ENCODE measurements at regions of chr17 and their contacts with region 1.

Region 1: GRCh38 chr17:64020056-64020766 is at the start of gene ICAM2:
- DNase-seq: peak; percentile 94 to 99 (median 97)
- H3K4me3 ChIP-seq: peak within 1 kb of the TSS; percentile 93 to 96
- H3K4me3 Mint-ChIP-seq: peak within 1 kb of the TSS; percentile 97 to 100 (median 99)
- H3K27ac ChIP-seq: peak within 1 kb of the TSS; percentile 93
- H3K27ac Mint-ChIP-seq: peak within 1 kb of the TSS; percentile 99 to 100 (median 100)
- H3K4me1 ChIP-seq: peaks cover 71% of the 10 kb centered on the region
- H3K4me1 Mint-ChIP-seq: peaks cover 51 to 85% (median 63%) of the 10 kb centered on the region in 4 donors
- H3K27me3 ChIP-seq: no peaks in the 10 kb centered on the region
- H3K27me3 Mint-ChIP-seq: peaks cover 0 to 1% of the 10 kb centered on the region in 2 donors
- total RNA-seq, gene ICAM2: 150 to 158 TPM

Region 2: DNA sequence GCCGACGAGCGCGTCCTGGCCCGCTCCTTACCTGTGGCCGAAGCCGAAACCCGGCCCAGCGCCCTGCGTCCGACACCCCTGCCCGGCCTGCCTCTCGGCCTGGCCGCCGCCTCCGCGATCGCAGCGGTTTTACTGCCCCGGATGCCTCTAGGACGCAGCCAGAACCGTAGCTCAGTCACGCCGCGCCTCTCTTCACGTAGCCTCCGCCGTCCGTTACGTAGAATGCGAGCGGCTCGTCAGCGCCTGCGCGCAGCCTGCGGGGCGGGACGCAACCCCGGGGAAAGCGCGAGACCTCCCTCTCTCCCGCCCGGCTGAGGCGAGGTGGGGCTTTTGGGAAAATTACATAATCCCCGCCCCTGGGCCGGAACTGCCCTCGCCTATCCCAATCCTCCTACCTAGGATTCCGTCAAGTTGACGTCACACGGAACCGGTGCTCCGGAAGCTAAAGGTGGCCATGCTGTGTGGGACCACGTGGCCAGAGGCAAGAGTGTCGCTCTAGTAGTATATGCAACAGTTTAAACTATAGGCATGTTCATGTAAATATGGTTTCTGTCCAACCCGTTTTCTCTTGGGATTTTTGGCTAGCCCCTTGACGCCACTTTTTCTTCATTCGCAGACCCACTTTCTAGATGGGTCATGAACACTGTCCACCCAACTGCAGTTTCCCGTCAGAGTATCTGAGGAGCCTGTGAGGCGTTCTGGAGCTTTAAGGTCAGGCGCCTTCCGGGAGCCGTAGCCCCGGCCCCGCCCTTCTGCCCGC is 246.7 kb before region 1 on chr17 and contains the start of gene CCDC47:
- CTCF ChIA-PET with region 1: no interaction called
- POLR2A ChIA-PET with region 1: interaction called, 8 read pairs
- intact Hi-C with region 1: loop called (anchors 2 kb)
- DNase-seq: peak; percentile 99
- H3K4me3 ChIP-seq: peak within 1 kb of the TSS; percentile 87 to 97
- H3K4me3 Mint-ChIP-seq: peak within 1 kb of the TSS; percentile 91 to 100 (median 99)
- H3K27ac ChIP-seq: peak within 1 kb of the TSS; percentile 99
- H3K27ac Mint-ChIP-seq: peak within 1 kb of the TSS; percentile 99 to 100 (median 100)
- H3K4me1 ChIP-seq: peaks cover 66% of the 10 kb centered on the region
- H3K4me1 Mint-ChIP-seq: peaks cover 33 to 81% (median 52%) of the 10 kb centered on the region in 4 donors
- H3K27me3 ChIP-seq: no peaks in the 10 kb centered on the region
- H3K27me3 Mint-ChIP-seq: no peaks in the 10 kb centered on the region
- total RNA-seq, gene CCDC47: 36.7 to 39.0 TPM

Region 3: GRCh38 chr17:63859257-63859656 is 161.0 kb before region 1 on chr17:
- CTCF ChIA-PET with region 1: no interaction called
- POLR2A ChIA-PET with region 1: no interaction called
- intact Hi-C with region 1: no loop called
- DNase-seq: no peak
- H3K4me3 ChIP-seq: no peak overlapping the region
- H3K4me3 Mint-ChIP-seq: no peak overlapping the region
- H3K27ac ChIP-seq: no peak overlapping the region
- H3K27ac Mint-ChIP-seq: no peak overlapping the region
- H3K4me1 ChIP-seq: no peaks in the 10 kb centered on the region
- H3K4me1 Mint-ChIP-seq: no peaks in the 10 kb centered on the region
- H3K27me3 ChIP-seq: no peaks in the 10 kb centered on the region
- H3K27me3 Mint-ChIP-seq: no peaks in the 10 kb centered on the region

Region 4: DNA sequence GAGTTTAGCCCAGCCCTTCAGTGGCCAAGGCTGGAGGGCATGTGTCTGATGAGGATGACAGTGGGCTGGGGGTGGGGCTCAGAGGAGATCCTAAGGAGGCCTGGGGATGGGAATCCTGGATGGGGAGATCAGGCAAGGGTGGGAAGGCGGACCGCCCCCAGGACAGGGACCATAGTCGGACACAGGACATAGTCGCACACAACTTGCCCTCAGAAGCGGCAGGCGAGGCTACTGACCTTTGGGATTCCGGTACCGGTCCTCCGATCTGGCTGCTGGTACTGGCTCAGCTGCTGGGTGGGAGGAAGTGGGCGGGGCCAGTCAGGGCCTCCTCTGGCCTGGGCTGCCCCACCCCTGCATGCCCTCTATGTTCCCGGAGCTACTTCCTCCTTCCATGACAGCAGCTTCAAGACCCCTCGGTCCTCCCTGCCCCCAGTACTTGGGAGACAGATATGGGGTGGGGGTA is 89.1 kb before region 1 on chr17:
- CTCF ChIA-PET with region 1: interaction called, 7 read pairs
- POLR2A ChIA-PET with region 1: interaction called, 23 read pairs
- intact Hi-C with region 1: no loop called
- DNase-seq: peak; percentile 43 to 66 (median 49)
- H3K4me3 ChIP-seq: peak overlapping the region; percentile 48 to 51
- H3K4me3 Mint-ChIP-seq: peak overlapping the region; percentile 92 to 98 (median 94)
- H3K27ac ChIP-seq: peak overlapping the region; percentile 71
- H3K27ac Mint-ChIP-seq: peak overlapping the region; percentile 48 to 96 (median 94)
- H3K4me1 ChIP-seq: peaks cover 25% of the 10 kb centered on the region
- H3K4me1 Mint-ChIP-seq: peaks cover 7 to 32% (median 22%) of the 10 kb centered on the region in 4 donors
- H3K27me3 ChIP-seq: no peaks in the 10 kb centered on the region
- H3K27me3 Mint-ChIP-seq: no peaks in the 10 kb centered on the region

Region 5: GRCh38 chr17:63984651-63985386 is 35.4 kb before region 1 on chr17:
- CTCF ChIA-PET with region 1: interaction called, 556 read pairs
- POLR2A ChIA-PET with region 1: interaction called, 37 read pairs
- intact Hi-C with region 1: no loop called
- DNase-seq: peak; percentile 46 to 86 (median 70)
- H3K4me3 ChIP-seq: no peak overlapping the region
- H3K4me3 Mint-ChIP-seq: peak overlapping the region in 5 of 8 donors; percentile 10 to 86 (median 47)
- H3K27ac ChIP-seq: no peak overlapping the region
- H3K27ac Mint-ChIP-seq: peak overlapping the region; percentile 61 to 98 (median 87)
- H3K4me1 ChIP-seq: peaks cover 18% of the 10 kb centered on the region
- H3K4me1 Mint-ChIP-seq: peaks cover 16 to 29% (median 19%) of the 10 kb centered on the region in 4 donors
- H3K27me3 ChIP-seq: no peaks in the 10 kb centered on the region
- H3K27me3 Mint-ChIP-seq: peaks cover 0 to 2% of the 10 kb centered on the region in 2 donors

Region 6: DNA sequence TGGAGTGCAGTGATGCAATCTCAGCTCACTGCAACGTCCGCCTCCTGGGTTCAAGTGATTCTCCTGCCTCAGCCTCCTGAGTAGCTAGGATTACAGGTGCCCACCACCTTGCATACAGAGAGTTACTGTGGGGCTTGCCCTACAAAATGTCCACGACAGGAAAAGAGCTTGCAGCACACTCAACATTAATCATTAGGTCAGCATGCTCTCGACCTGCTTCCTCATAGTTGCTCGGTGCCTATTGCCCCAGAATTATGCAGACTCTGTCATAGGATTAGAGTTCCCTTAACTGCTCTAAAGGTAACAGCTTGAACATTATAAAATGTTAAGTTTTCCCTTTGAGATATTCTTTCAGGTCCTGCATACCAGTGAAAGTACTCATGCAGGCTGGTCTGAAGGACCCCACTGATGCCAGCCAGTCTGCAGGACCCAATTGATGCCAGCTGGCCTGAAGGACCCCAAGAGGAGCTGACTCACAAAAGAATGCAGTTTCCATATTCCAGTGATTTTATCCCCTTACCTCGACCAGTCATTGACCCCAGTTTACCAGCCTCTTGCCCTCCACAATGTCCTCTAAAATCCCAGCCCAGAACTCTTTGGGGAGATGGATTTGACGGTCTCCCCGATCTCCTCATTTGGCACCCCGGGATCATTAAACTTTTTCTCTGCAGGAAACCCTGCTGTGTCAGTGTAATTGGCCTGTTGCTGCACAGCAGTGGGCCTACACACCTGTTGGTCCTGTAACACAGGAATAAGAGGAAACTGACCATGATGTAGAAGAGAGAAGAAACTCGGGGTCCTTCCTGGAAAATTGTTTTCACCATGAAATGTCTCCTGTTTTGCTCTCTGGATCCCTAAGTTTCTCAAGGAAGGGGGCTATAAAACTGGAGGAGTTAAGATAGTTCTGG is 10.5 kb before region 1 on chr17:
- CTCF ChIA-PET with region 1: interaction called, 556 read pairs
- POLR2A ChIA-PET with region 1: interaction called, 587 read pairs
- intact Hi-C with region 1: loop called (anchors 1 kb)
- DNase-seq: no peak
- H3K4me3 ChIP-seq: no peak overlapping the region
- H3K4me3 Mint-ChIP-seq: peak overlapping the region; percentile 21 to 64 (median 46)
- H3K27ac ChIP-seq: no peak overlapping the region
- H3K27ac Mint-ChIP-seq: peak overlapping the region; percentile 60 to 99 (median 85)
- H3K4me1 ChIP-seq: peaks cover 90% of the 10 kb centered on the region
- H3K4me1 Mint-ChIP-seq: peaks cover 40 to 88% (median 61%) of the 10 kb centered on the region in 4 donors
- H3K27me3 ChIP-seq: no peaks in the 10 kb centered on the region
- H3K27me3 Mint-ChIP-seq: no peaks in the 10 kb centered on the region

Region 7: DNA sequence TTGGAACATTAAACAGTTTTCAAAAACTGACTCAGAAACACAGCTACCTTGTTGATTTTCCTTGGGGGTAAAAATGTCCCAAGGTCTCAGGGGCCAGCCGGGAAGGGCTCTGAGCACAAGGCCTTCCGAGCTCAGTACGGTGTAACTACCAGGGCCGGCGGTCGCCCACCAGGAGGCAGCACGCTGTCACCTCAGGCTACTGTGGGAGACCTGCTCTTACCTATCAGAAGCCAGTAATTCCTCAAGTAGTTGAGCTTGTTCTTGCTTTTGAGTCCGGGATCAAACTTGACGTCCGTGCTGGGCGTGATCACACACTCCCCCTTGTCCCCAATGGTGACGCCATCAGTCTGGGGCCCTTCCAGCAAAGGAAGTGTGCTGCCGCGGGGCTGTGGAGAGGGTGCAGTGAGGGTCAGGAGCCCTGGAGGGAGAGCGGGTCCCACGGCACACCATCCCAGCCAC is 43.6 kb after region 1 on chr17:
- CTCF ChIA-PET with region 1: interaction called, 13 read pairs
- POLR2A ChIA-PET with region 1: interaction called, 3 read pairs
- intact Hi-C with region 1: no loop called
- DNase-seq: peak; percentile 39 to 74 (median 54)
- H3K4me3 ChIP-seq: no peak overlapping the region
- H3K4me3 Mint-ChIP-seq: peak overlapping the region; percentile 67 to 92 (median 88)
- H3K27ac ChIP-seq: peak overlapping the region; percentile 41
- H3K27ac Mint-ChIP-seq: peak overlapping the region; percentile 7 to 97 (median 92)
- H3K4me1 ChIP-seq: peaks cover 89% of the 10 kb centered on the region
- H3K4me1 Mint-ChIP-seq: peaks cover 48 to 100% (median 77%) of the 10 kb centered on the region in 4 donors
- H3K27me3 ChIP-seq: no peaks in the 10 kb centered on the region
- H3K27me3 Mint-ChIP-seq: no peaks in the 10 kb centered on the region

Region 8: GRCh38 chr17:64262417-64263260 is 242.4 kb after region 1 on chr17 and contains the start of gene TEX2:
- CTCF ChIA-PET with region 1: interaction called, 3 read pairs
- POLR2A ChIA-PET with region 1: interaction called, 9 read pairs
- intact Hi-C with region 1: loop called (anchors 2 kb)
- DNase-seq: peak; percentile 70 to 86 (median 73)
- H3K4me3 ChIP-seq: peak within 1 kb of the TSS; percentile 76 to 79
- H3K4me3 Mint-ChIP-seq: peak within 1 kb of the TSS; percentile 91 to 98 (median 95)
- H3K27ac ChIP-seq: peak within 1 kb of the TSS; percentile 74
- H3K27ac Mint-ChIP-seq: peak within 1 kb of the TSS; percentile 93 to 98 (median 96)
- H3K4me1 ChIP-seq: peaks cover 33% of the 10 kb centered on the region
- H3K4me1 Mint-ChIP-seq: peaks cover 21 to 46% (median 34%) of the 10 kb centered on the region in 4 donors
- H3K27me3 ChIP-seq: no peaks in the 10 kb centered on the region
- H3K27me3 Mint-ChIP-seq: peaks cover 0 to 9% of the 10 kb centered on the region in 2 donors
- total RNA-seq, gene TEX2: 12.6 to 13.1 TPM

Region 9: GRCh38 chr17:64326395-64327054 is 306.3 kb after region 1 on chr17:
- CTCF ChIA-PET with region 1: no interaction called
- POLR2A ChIA-PET with region 1: no interaction called
- intact Hi-C with region 1: no loop called
- DNase-seq: no peak
- H3K4me3 ChIP-seq: no peak overlapping the region
- H3K4me3 Mint-ChIP-seq: no peak overlapping the region
- H3K27ac ChIP-seq: no peak overlapping the region
- H3K27ac Mint-ChIP-seq: peak overlapping the region in 1 of 7 donors; percentile 29
- H3K4me1 ChIP-seq: peaks cover 6% of the 10 kb centered on the region
- H3K4me1 Mint-ChIP-seq: peaks cover 0 to 4% (median under 1%) of the 10 kb centered on the region in 4 donors
- H3K27me3 ChIP-seq: no peaks in the 10 kb centered on the region
- H3K27me3 Mint-ChIP-seq: no peaks in the 10 kb centered on the region